ENCODE measurements at regions of chr12 and their contacts with region 1.

Region 1: GRCh38 chr12:106919910-106920544 is 35.7 kb upstream of the TMEM263 start:
- DNase-seq: peak; percentile 52 to 61 (median 58)
- ATAC-seq: peak; percentile 69
- H3K4me3 ChIP-seq: no peak overlapping the region
- H3K27ac ChIP-seq: no peak overlapping the region
- H3K4me1 ChIP-seq: no peaks in the 10 kb centered on the region
- H3K27me3 ChIP-seq: peaks cover 7 to 11% of the 10 kb centered on the region in 2 experiments; a peak in 3 of 5 replicates
- CTCF ChIP-seq: peak; percentile 47 to 74 (median 64); a peak in 5 of 6 replicates
- EP300 ChIP-seq: no peak
- POLR2A ChIP-seq: no peak
- RAD21 ChIP-seq: peak; percentile 66 to 84

Region 2: DNA sequence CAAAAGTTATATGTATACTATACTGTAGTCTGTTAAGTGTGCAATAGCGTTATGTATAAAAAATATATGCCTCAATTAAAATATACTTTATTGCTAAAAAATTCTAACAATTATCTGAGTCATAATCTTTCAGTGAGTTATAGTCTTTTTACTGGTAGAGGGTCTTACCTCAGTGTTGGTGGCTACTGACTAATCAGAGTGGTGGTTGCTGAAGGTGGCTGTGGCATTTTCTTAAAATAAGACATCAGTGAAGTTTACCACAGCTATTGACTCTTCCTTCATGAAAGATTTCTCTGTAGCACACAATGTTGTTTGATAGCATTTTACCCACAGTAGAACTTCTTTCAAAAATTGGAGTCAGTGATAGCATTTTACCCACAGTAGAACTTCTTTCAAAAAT is 539.1 kb before region 1 on chr12:
- CTCF ChIA-PET with region 1: interaction called, 35 read pairs
- POLR2A ChIA-PET with region 1: no interaction called
- in situ Hi-C with region 1: loop called (anchors 5 kb)
- intact Hi-C with region 1: loop called (anchors 1 kb)
- DNase-seq: no peak
- ATAC-seq: no peak
- H3K4me3 ChIP-seq: no peak overlapping the region
- H3K27ac ChIP-seq: no peak overlapping the region
- H3K4me1 ChIP-seq: peaks cover 0 to 8% of the 10 kb centered on the region in 2 experiments; a peak in 1 of 5 replicates
- H3K27me3 ChIP-seq: no peaks in the 10 kb centered on the region
- CTCF ChIP-seq: no peak
- EP300 ChIP-seq: no peak
- POLR2A ChIP-seq: no peak
- RAD21 ChIP-seq: no peak

Region 3: GRCh38 chr12:106386813-106387535 is 533.1 kb before region 1 on chr12:
- CTCF ChIA-PET with region 1: interaction called, 35 read pairs
- POLR2A ChIA-PET with region 1: no interaction called
- in situ Hi-C with region 1: loop called (anchors 5 kb)
- intact Hi-C with region 1: loop called (anchors 1 kb)
- DNase-seq: no peak
- ATAC-seq: no peak
- H3K4me3 ChIP-seq: no peak overlapping the region
- H3K27ac ChIP-seq: no peak overlapping the region
- H3K4me1 ChIP-seq: no peaks in the 10 kb centered on the region
- H3K27me3 ChIP-seq: no peaks in the 10 kb centered on the region
- CTCF ChIP-seq: no peak
- EP300 ChIP-seq: no peak
- POLR2A ChIP-seq: no peak
- RAD21 ChIP-seq: no peak

Region 4: GRCh38 chr12:106682592-106683234 is 237.3 kb before region 1 on chr12:
- CTCF ChIA-PET with region 1: no interaction called
- POLR2A ChIA-PET with region 1: no interaction called
- in situ Hi-C with region 1: no loop called
- intact Hi-C with region 1: loop called (anchors 5 kb)
- DNase-seq: peak in 2 of 4 experiments; percentile 20 to 40
- ATAC-seq: peak; percentile 82
- H3K4me3 ChIP-seq: no peak overlapping the region
- H3K27ac ChIP-seq: no peak overlapping the region
- H3K4me1 ChIP-seq: no peaks in the 10 kb centered on the region
- H3K27me3 ChIP-seq: peaks cover 4 to 20% of the 10 kb centered on the region in 2 experiments; a peak in 2 of 5 replicates
- CTCF ChIP-seq: peak; percentile 18 to 47 (median 28); a peak in 2 of 6 replicates
- EP300 ChIP-seq: no peak
- POLR2A ChIP-seq: no peak
- RAD21 ChIP-seq: peak in 1 of 2 experiments; percentile 60; a peak in 3 of 4 replicates

Region 5: GRCh38 chr12:106736051-106736957 is 183.7 kb before region 1 on chr12:
- CTCF ChIA-PET with region 1: no interaction called
- POLR2A ChIA-PET with region 1: no interaction called
- in situ Hi-C with region 1: no loop called
- intact Hi-C with region 1: loop called (anchors 10 kb)
- DNase-seq: peak in 1 of 4 experiments; percentile 29
- ATAC-seq: peak; percentile 73
- H3K4me3 ChIP-seq: no peak overlapping the region
- H3K27ac ChIP-seq: no peak overlapping the region
- H3K4me1 ChIP-seq: peaks cover 0 to 17% of the 10 kb centered on the region in 2 experiments; a peak in 2 of 5 replicates
- H3K27me3 ChIP-seq: peaks cover 7 to 8% of the 10 kb centered on the region in 2 experiments; a peak in 4 of 5 replicates
- CTCF ChIP-seq: peak in 2 of 3 experiments; percentile 31 to 42; a peak in 4 of 6 replicates
- EP300 ChIP-seq: no peak
- POLR2A ChIP-seq: no peak
- RAD21 ChIP-seq: peak; percentile 22 to 40; a peak in 2 of 4 replicates